Activated CD4-positive, alpha-beta memory T cell treated with anti-CD3 and anti-CD28 coated beads, Interleukin-2, amount 10 ng/mL, durations not matched to agents 7 days and 5 days (primary cell): ENCODE measurements at regions of chr5 and their contacts with region 1.

Region 1: DNA sequence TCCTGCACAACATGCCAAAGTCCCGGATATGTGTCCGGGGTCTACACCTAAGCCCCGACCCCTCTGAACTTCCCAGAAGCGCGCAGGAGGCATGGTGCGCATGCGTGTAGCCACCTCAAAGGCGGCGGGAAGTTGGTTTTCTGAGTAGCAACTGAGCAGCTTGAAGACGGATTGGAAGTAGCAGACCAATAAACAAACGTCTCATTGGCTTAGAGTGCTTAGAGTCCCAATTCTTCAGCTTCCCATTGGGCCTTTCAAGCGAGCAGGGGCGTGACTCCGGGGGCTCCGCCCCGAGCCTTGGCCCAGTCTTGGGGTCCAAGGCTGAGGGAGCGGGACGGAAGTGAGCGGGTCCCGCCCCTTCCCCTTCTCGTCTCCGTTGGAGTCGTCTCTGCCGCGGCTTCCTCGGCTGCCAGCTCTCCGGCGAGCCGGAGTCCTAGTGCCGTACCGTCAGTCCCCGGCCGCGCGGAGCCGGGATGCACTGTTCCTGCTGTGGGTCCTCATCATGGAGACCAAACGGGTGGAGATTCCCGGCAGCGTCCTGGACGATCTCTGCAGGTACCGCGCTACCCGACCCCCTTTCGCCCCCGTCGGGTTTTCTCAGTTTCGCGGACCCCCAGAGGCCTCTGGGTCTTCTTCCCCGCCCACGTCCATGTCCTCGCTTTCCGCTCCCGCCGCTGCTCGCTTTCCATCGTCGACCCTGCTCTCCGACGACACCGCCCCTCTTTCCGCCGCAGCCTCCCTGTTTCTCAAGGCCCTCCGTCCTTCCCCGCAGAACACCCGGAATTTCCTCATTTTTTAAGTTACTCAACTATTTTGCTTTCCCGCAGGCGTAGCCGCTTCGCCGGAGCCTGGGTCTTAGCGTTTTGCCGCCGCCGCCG is at the start of gene DCP2:
- DNase-seq: peak; percentile 97
- H3K4me3 Mint-ChIP-seq: peak within 1 kb of the TSS; percentile 99
- H3K27ac Mint-ChIP-seq: peak within 1 kb of the TSS; percentile 96
- H3K4me1 Mint-ChIP-seq: peaks cover 46% of the 10 kb centered on the region
- H3K27me3 Mint-ChIP-seq: no peaks in the 10 kb centered on the region
- total RNA-seq, gene DCP2: 135 to 138 TPM

Region 2: GRCh38 chr5:112707187-112708102 is 269.2 kb before region 1 on chr5:
- CTCF ChIA-PET with region 1: no interaction called
- POLR2A ChIA-PET with region 1: interaction called, 21 read pairs
- DNase-seq: peak; percentile 97
- H3K4me3 Mint-ChIP-seq: peak overlapping the region; percentile 90
- H3K27ac Mint-ChIP-seq: peak overlapping the region; percentile 72
- H3K4me1 Mint-ChIP-seq: peaks cover 35% of the 10 kb centered on the region
- H3K27me3 Mint-ChIP-seq: peaks cover 3% of the 10 kb centered on the region

Region 3: GRCh38 chr5:112860929-112861637 is 115.6 kb before region 1 on chr5 and contains the start of gene SRP19:
- CTCF ChIA-PET with region 1: no interaction called
- POLR2A ChIA-PET with region 1: interaction called, 14 read pairs
- DNase-seq: peak; percentile 93
- H3K4me3 Mint-ChIP-seq: peak within 1 kb of the TSS; percentile 95
- H3K27ac Mint-ChIP-seq: peak within 1 kb of the TSS; percentile 90
- H3K4me1 Mint-ChIP-seq: peaks cover 42% of the 10 kb centered on the region
- H3K27me3 Mint-ChIP-seq: peaks cover 3% of the 10 kb centered on the region
- total RNA-seq, gene SRP19: 54.6 to 68.3 TPM

Region 4: DNA sequence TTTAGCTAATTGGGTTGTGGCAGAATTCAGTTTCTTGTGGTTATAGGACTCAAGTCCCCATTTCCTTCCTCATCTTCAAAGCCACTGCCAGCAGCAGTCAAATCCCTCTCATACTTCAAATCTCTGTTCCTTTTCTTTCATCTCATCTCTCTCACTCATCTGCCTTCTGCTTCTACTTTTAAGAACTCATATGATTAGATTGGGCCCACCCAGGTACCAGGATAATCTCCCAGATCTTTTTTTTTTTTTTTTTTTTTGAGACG is 46.7 kb before region 1 on chr5:
- CTCF ChIA-PET with region 1: interaction called, 5 read pairs
- POLR2A ChIA-PET with region 1: interaction called, 94 read pairs
- DNase-seq: no peak
- H3K4me3 Mint-ChIP-seq: peak overlapping the region; percentile 65
- H3K27ac Mint-ChIP-seq: peak overlapping the region; percentile 97
- H3K4me1 Mint-ChIP-seq: peaks cover 55% of the 10 kb centered on the region
- H3K27me3 Mint-ChIP-seq: no peaks in the 10 kb centered on the region

Region 5: GRCh38 chr5:112958093-112959088 is 18.3 kb before region 1 on chr5:
- CTCF ChIA-PET with region 1: interaction called, 23 read pairs
- POLR2A ChIA-PET with region 1: interaction called, 23 read pairs
- DNase-seq: no peak
- H3K4me3 Mint-ChIP-seq: no peak overlapping the region
- H3K27ac Mint-ChIP-seq: no peak overlapping the region
- H3K4me1 Mint-ChIP-seq: peaks cover 37% of the 10 kb centered on the region
- H3K27me3 Mint-ChIP-seq: no peaks in the 10 kb centered on the region

Region 6: GRCh38 chr5:113022661-113023060 is 46.0 kb after region 1 on chr5:
- CTCF ChIA-PET with region 1: interaction called, 5 read pairs
- POLR2A ChIA-PET with region 1: interaction called, 29 read pairs
- DNase-seq: no peak
- H3K4me3 Mint-ChIP-seq: peak overlapping the region; percentile 40
- H3K27ac Mint-ChIP-seq: peak overlapping the region; percentile 86
- H3K4me1 Mint-ChIP-seq: peaks cover 68% of the 10 kb centered on the region
- H3K27me3 Mint-ChIP-seq: no peaks in the 10 kb centered on the region

Region 7: GRCh38 chr5:113043491-113043931 is 66.8 kb after region 1 on chr5:
- CTCF ChIA-PET with region 1: no interaction called
- POLR2A ChIA-PET with region 1: no interaction called
- DNase-seq: peak; percentile 46
- H3K4me3 Mint-ChIP-seq: no peak overlapping the region
- H3K27ac Mint-ChIP-seq: no peak overlapping the region
- H3K4me1 Mint-ChIP-seq: peaks cover 8% of the 10 kb centered on the region
- H3K27me3 Mint-ChIP-seq: no peaks in the 10 kb centered on the region

Region 8: GRCh38 chr5:113294311-113295110 is 317.8 kb after region 1 on chr5:
- CTCF ChIA-PET with region 1: no interaction called
- POLR2A ChIA-PET with region 1: interaction called, 18 read pairs
- DNase-seq: peak; percentile 86
- H3K4me3 Mint-ChIP-seq: peak overlapping the region; percentile 93
- H3K27ac Mint-ChIP-seq: peak overlapping the region; percentile 79
- H3K4me1 Mint-ChIP-seq: peaks cover 27% of the 10 kb centered on the region
- H3K27me3 Mint-ChIP-seq: peaks cover 45% of the 10 kb centered on the region